ENCODE measurements at regions of chr4 and their contacts with region 1.

Region 1: DNA sequence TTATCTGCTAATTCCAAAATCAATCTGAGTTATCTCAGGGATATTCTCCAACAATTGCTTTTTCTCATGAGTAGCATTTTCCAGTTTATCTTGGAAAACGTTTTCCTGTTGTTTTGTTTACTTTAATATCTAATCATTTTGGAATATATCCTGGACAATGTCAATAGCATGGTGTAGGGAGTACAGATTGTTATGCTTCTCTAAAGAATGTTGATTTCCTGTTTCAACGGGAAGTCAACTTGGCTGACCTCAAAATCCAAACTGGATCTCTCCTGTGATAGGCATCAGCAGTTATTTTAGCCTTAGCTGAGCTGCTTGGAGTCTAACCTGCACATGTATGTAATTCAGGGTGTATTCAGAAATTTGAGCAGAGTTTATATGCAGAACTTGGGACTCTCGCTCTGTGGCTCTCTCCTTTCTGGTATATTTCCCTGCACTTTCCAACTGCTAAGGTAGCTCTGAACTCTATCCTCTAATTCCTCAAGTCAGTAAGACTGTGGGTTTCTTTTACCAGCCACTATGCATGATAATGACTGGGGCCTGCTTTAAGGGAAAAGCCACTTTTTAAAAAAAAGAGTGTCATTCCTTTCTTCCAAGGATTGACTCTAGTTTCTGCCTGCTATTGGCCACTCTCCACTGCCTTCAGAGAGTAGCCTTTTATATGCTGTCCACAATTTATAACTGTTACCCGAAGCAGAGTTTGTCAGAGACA is 7.7 kb downstream of the PRSS48 start:
- DNase-seq: peak; percentile 87
- H3K4me3 ChIP-seq: peak overlapping the region in 1 of 3 experiments; percentile 37
- H3K27ac ChIP-seq: peak overlapping the region; percentile 70
- H3K4me1 ChIP-seq: peaks cover 42% of the 10 kb centered on the region
- H3K27me3 ChIP-seq: no peaks in the 10 kb centered on the region
- CTCF ChIP-seq: no peak
- POLR2A ChIP-seq: no peak

Region 2: GRCh38 chr4:151315212-151315886 is 30.7 kb after region 1 on chr4:
- CTCF ChIA-PET with region 1: interaction called, 3 read pairs
- POLR2A ChIA-PET with region 1: no interaction called
- dilution Hi-C with region 1: no loop called
- intact Hi-C with region 1: loop called (anchors 1 kb)
- DNase-seq: peak; percentile 64
- H3K4me3 ChIP-seq: peak overlapping the region in 1 of 3 experiments; percentile 24
- H3K27ac ChIP-seq: peak overlapping the region; percentile 72
- H3K4me1 ChIP-seq: peaks cover 48% of the 10 kb centered on the region
- H3K27me3 ChIP-seq: no peaks in the 10 kb centered on the region
- CTCF ChIP-seq: no peak
- POLR2A ChIP-seq: no peak

Region 3: DNA sequence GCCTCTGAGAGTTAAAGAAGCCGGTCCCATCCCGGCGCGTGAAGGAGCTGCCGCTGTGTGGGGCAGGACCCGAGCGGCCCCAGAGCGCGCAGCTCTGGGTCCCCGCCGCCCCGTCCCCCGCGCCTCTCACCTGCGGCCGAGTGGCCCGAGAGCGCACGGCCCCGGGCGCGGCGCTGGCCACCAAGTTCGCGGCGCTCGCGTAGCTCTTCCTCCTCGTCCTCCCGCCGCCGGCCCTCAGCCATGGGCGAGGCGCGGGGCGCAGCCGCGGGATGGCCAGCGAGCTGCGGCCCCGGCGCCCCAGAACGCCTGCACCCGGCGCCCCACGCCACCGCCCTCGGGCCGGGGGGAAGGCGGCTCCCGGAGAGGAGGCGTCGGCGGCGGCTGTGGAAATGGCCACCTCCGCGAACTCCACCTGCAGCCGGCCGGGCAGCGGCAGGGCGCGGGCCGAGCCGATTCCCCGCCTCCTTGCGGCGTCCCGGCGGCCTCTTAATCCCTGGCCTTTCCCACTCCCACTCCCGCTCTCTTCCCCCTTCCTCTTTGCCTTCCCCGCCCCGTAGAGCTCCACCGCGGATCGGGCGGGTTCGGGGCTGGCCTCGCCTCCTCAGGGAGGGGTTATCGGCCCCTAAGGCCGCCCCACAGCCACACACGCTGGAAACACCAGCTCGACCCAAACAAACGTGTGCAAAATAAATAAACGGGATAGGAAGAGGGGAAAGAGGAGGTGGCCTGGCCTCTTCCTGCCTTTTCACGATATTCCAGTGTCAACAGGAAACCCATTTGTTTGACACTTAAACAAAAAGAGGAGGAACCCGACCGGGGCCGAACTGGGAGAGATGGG is 40.6 kb after region 1 on chr4 and contains the start of gene SH3D19:
- CTCF ChIA-PET with region 1: interaction called, 4 read pairs
- POLR2A ChIA-PET with region 1: no interaction called
- dilution Hi-C with region 1: no loop called
- intact Hi-C with region 1: loop called (anchors 1 kb)
- DNase-seq: peak; percentile 91
- H3K4me3 ChIP-seq: peak within 1 kb of the TSS; percentile 55 to 86 (median 74)
- H3K27ac ChIP-seq: peak within 1 kb of the TSS; percentile 69
- H3K4me1 ChIP-seq: peaks cover 24% of the 10 kb centered on the region
- H3K27me3 ChIP-seq: no peaks in the 10 kb centered on the region
- CTCF ChIP-seq: no peak
- POLR2A ChIP-seq: peak; percentile 30
- total RNA-seq, gene SH3D19: 86.3 and 92.8 TPM in 2 replicates

Region 4: DNA sequence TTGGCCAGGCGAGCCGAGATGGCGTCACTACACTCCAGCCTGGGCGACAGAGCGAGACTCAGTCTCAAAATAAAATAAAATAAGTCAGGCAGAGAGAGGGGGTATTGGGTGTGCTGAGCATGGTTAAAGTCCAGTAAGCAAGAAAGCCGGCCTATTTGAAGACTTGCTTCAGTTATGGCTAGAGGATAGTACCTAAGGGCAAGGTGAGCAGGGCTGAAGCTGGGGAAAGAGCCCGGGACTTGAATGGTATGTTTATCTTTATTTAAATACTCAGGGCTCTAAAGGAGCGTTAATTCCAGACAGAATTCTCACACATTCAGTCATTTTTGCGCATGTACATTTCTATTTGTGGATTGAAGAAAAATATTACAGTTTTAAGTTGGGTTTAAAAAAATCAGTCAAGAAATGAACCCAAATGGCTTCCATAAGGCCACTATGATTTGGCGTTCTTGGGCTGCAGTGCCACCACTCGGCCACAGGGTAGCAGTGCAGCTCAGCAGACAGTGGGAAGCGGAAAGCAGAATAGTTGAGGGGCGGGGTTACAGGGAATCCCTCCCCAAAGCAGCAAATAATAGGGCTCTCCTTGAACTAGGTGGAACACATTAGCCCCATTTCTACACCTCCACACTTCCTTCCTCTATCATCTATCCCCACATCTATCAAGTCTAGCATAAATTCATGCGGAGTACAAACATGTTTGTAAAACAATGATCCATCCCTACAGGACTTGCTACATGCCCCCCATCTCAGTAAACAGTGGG is 77.9 kb after region 1 on chr4:
- CTCF ChIA-PET with region 1: interaction called, 6 read pairs
- POLR2A ChIA-PET with region 1: no interaction called
- dilution Hi-C with region 1: no loop called
- intact Hi-C with region 1: loop called (anchors 2 kb)
- DNase-seq: peak; percentile 87
- H3K4me3 ChIP-seq: no peak overlapping the region
- H3K27ac ChIP-seq: no peak overlapping the region
- H3K4me1 ChIP-seq: no peaks in the 10 kb centered on the region
- H3K27me3 ChIP-seq: no peaks in the 10 kb centered on the region
- CTCF ChIP-seq: peak; percentile 96 to 100
- POLR2A ChIP-seq: no peak

Region 5: GRCh38 chr4:151418385-151418784 is 133.7 kb after region 1 on chr4:
- CTCF ChIA-PET with region 1: no interaction called
- POLR2A ChIA-PET with region 1: no interaction called
- dilution Hi-C with region 1: no loop called
- intact Hi-C with region 1: loop called (anchors 2 kb)
- DNase-seq: peak; percentile 91
- H3K4me3 ChIP-seq: no peak overlapping the region
- H3K27ac ChIP-seq: peak overlapping the region; percentile 89
- H3K4me1 ChIP-seq: peaks cover 43% of the 10 kb centered on the region
- H3K27me3 ChIP-seq: no peaks in the 10 kb centered on the region
- CTCF ChIP-seq: no peak
- POLR2A ChIP-seq: peak; percentile 35

Measured in endothelial cell of umbilical vein (primary cell).